GM12878 (cell line): ENCODE measurements at regions of chr5 and their contacts with region 1.

Region 1: DNA sequence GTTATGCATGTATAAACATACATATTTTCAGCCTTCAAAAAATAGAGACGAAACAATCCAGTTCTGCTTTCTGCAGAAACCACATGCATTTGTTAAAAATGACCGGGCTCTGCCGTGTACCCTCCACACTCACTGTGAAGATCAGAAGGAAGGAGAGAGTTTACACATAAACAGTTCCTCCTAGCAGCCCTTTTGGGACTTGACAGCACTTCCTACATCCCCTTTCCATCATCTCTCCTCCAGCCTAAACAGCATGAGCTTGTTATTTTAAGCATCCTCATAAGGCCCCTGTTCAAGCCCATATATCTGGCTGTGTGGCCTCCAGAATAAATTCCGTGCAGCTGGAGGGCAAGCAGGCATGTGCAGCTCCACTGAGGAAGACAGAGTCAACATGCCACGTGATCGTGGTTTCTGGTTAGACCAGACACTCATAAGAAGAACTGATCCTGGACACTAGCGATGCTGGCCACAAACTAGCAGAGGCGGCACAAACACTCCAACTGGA is 42.2 kb downstream of the NIPAL4 start:
- DNase-seq: peak; percentile 82
- ATAC-seq: peak; percentile 83
- H3K4me3 ChIP-seq: no peak overlapping the region
- H3K27ac ChIP-seq: peak overlapping the region; percentile 89
- H3K4me1 ChIP-seq: peaks cover 70% of the 10 kb centered on the region
- H3K27me3 ChIP-seq: no peaks in the 10 kb centered on the region
- CTCF ChIP-seq: no peak
- EP300 ChIP-seq: peak; percentile 51 to 88; a peak in 3 of 4 replicates
- POLR2A ChIP-seq: no peak
- RAD21 ChIP-seq: 0 out of 2 replicates have a peak, but pooled peaks have one; percentile 13

Region 2: DNA sequence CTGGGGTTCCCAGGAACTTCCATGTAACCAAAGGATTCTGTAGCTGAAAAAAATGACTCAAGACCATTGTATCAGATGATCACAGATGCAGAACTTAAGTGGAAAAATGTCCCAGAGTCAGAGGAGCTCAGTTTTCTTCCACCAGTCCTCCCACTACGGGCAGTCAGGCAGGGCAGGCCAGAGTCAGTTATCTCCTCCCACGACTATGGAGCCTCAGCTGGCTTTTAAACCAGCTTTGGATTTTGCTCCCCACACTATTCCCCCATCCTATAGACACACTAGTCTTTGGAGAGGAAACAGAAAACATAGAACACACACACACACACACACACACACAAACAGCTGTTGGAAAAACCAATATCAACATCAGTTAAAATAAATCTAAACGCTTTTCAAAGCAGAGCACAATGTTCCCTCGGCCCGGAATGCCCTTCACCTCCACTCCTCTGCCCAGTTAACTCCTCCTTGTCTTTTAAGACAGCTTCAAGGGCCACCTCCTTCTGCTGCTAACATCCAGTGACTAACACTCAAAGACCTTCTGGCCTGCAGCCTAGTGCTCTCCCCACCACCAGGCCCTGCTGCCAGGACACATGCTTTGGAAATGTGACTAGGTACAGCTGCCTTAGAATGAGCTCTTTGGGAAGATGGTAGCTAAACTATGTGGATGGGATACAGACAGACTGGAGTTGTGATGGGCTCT is 14.6 kb after region 1 on chr5:
- CTCF ChIA-PET with region 1: interaction called, 4 read pairs
- POLR2A ChIA-PET with region 1: interaction called, 4 read pairs
- RAD21 ChIA-PET with region 1: interaction called, 6 read pairs
- SMC1A ChIA-PET with region 1: interaction called, 30 read pairs
- in situ Hi-C with region 1: no loop called
- intact Hi-C with region 1: loop called (anchors 1 kb)
- DNase-seq: no peak
- ATAC-seq: no peak
- H3K4me3 ChIP-seq: no peak overlapping the region
- H3K27ac ChIP-seq: no peak overlapping the region
- H3K4me1 ChIP-seq: peaks cover 29% of the 10 kb centered on the region
- H3K27me3 ChIP-seq: no peaks in the 10 kb centered on the region
- CTCF ChIP-seq: no peak
- EP300 ChIP-seq: no peak
- POLR2A ChIP-seq: no peak
- RAD21 ChIP-seq: no peak

Region 3: DNA sequence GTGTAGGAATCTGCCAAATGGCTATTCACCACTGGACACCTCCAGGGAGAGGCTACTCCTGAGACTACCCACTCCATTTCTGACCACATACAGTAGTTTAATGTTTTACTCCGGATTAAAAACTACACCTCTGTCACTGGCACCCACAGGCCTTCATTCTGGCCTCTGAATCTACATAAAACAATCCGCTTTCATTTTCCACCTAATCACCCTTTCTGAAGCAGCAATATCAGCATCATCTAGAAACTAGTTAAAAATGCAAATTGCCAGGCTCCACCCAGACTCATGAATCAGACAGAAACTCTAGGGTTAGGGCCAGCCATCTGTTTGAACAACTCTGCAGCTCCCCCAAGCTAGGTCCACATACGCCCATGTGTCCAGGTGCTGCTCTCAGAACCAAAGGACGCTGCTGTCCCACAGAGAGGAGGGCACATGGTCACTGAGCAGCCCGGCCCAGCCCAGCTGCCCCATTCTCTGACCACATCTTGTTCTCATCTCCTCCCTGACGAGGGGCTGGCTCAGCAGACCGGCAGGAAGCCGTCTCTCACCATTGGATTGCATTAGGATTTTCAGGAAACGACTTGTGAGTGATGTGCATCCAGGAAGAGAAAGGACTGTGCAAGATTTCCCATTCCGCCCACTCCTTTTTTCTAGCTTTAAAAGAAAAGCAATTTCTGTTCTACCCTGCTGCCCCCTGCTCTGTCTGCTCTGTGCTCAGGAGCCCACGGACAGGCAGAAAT is 38.7 kb after region 1 on chr5:
- CTCF ChIA-PET with region 1: interaction called, 5 read pairs
- POLR2A ChIA-PET with region 1: no interaction called
- RAD21 ChIA-PET with region 1: interaction called, 7 read pairs
- SMC1A ChIA-PET with region 1: interaction called, 14 read pairs
- in situ Hi-C with region 1: no loop called
- intact Hi-C with region 1: loop called (anchors 2 kb)
- DNase-seq: peak; percentile 87
- ATAC-seq: peak; percentile 93
- H3K4me3 ChIP-seq: peak overlapping the region; percentile 56
- H3K27ac ChIP-seq: peak overlapping the region; percentile 92
- H3K4me1 ChIP-seq: peaks cover 49% of the 10 kb centered on the region
- H3K27me3 ChIP-seq: no peaks in the 10 kb centered on the region
- CTCF ChIP-seq: no peak
- EP300 ChIP-seq: peak; percentile 50 to 64; a peak in 2 of 4 replicates
- POLR2A ChIP-seq: peak; percentile 51
- RAD21 ChIP-seq: peak; percentile 12; the same call in 1 of the 2 replicates

Region 4: DNA sequence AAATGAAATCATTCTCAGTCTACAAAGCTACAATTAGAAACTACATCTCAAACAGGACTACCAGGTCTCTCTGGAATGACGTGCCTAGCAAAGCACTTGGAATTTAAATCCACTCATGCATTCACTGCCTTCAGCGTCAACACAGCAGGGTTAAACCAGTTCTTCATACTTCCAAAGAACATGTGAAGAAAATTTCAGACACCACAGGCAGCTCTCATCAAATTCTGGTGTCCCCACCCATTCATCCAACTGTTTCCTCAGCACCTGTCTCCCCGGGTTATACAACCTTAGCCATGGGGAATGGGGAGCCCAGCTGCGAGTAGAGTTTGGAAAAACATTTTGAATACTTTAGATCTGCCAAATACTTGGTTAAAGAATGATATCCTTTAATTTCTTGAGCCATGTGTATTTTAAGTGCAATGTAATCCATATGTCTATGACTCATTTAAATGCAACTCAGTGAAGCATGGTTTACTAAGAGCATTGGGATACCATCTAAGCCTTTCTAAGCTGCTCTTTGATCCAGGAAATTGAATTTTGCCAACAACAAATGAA is 55.9 kb after region 1 on chr5:
- CTCF ChIA-PET with region 1: no interaction called
- POLR2A ChIA-PET with region 1: no interaction called
- RAD21 ChIA-PET with region 1: interaction called, 4 read pairs
- SMC1A ChIA-PET with region 1: interaction called, 3 read pairs
- in situ Hi-C with region 1: no loop called
- intact Hi-C with region 1: loop called (anchors 5 kb)
- DNase-seq: no peak
- ATAC-seq: no peak
- H3K4me3 ChIP-seq: no peak overlapping the region
- H3K27ac ChIP-seq: no peak overlapping the region
- H3K4me1 ChIP-seq: peaks cover 24% of the 10 kb centered on the region
- H3K27me3 ChIP-seq: no peaks in the 10 kb centered on the region
- CTCF ChIP-seq: no peak
- EP300 ChIP-seq: no peak
- POLR2A ChIP-seq: no peak
- RAD21 ChIP-seq: no peak

Region 5: GRCh38 chr5:157665467-157666100 is 163.4 kb after region 1 on chr5:
- CTCF ChIA-PET with region 1: interaction called, 3 read pairs
- POLR2A ChIA-PET with region 1: no interaction called
- RAD21 ChIA-PET with region 1: no interaction called
- SMC1A ChIA-PET with region 1: no interaction called
- in situ Hi-C with region 1: no loop called
- intact Hi-C with region 1: loop called (anchors 5 kb)
- DNase-seq: no peak
- ATAC-seq: no peak
- H3K4me3 ChIP-seq: no peak overlapping the region
- H3K27ac ChIP-seq: no peak overlapping the region
- H3K4me1 ChIP-seq: no peaks in the 10 kb centered on the region; the same call in 1 of the 2 replicates
- H3K27me3 ChIP-seq: no peaks in the 10 kb centered on the region
- CTCF ChIP-seq: no peak
- EP300 ChIP-seq: no peak
- POLR2A ChIP-seq: no peak
- RAD21 ChIP-seq: no peak

Region 6: DNA sequence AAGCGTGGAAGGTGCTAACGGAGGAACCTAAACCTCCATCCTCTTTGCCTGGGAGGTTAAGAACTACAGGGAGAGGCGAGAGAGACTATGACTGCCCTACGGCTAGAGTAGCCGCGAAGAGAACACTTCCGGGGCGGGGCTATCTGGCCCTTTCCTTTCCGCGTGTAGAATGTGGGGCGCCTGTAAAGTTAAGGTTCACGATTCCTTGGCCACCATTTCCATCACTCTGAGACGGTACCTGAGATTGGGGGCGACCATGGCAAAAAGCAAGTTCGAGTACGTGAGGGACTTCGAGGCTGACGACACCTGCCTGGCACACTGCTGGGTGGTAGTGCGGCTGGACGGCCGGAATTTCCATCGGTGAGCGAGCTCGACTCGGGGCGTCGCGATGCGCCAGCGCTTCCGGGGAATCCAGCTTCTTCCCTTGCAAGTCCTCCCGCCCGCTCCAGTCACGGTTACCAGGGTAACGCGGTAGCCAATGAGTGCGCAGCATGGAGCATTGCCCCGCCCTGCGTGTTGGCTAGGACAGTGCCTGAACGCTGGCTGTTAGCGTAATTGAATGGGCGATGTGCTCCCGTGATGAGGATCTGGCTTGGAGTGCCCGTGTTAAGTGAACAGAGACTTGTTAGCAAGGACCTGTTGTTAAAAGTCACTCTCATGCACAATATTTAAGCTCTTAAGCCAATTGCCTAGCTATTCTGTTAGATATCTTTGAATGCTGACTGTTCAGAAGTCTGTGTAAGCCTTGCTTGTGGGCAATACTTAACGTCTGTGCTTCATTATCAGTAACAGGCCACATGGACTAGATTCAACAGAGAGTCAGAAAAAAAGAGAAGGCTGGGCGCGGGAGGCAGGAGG is 229.3 kb after region 1 on chr5 and contains the start of gene THG1L:
- CTCF ChIA-PET with region 1: no interaction called
- POLR2A ChIA-PET with region 1: no interaction called
- RAD21 ChIA-PET with region 1: interaction called, 3 read pairs
- SMC1A ChIA-PET with region 1: no interaction called
- in situ Hi-C with region 1: no loop called
- intact Hi-C with region 1: loop called (anchors 5 kb)
- DNase-seq: peak; percentile 94
- ATAC-seq: peak; percentile 92
- H3K4me3 ChIP-seq: peak within 1 kb of the TSS; percentile 85
- H3K27ac ChIP-seq: peak within 1 kb of the TSS; percentile 92
- H3K4me1 ChIP-seq: peaks cover 21% of the 10 kb centered on the region
- H3K27me3 ChIP-seq: no peaks in the 10 kb centered on the region
- CTCF ChIP-seq: no peak
- EP300 ChIP-seq: no peak
- POLR2A ChIP-seq: peak; percentile 97
- RAD21 ChIP-seq: no peak
- polyA plus RNA-seq, gene THG1L: 37.2 to 58.0 TPM